Transverse colon (tissue), 4 donors: ENCODE measurements at regions of chr11 and their contacts with region 1.

Region 1: GRCh38 chr11:130434521-130435223 is 6.3 kb upstream of the ADAMTS8 start:
- DNase-seq: peak; percentile 74
- H3K4me3 ChIP-seq: peak overlapping the region; percentile 31 to 56 (median 46)
- H3K27ac ChIP-seq: peak overlapping the region; percentile 39 to 80 (median 74)
- H3K4me1 ChIP-seq: peaks cover 5 to 10% (median 7%) of the 10 kb centered on the region in 4 donors
- H3K27me3 ChIP-seq: peaks cover 13% of the 10 kb centered on the region
- CTCF ChIP-seq: peak; percentile 64 to 94 (median 73)
- EP300 ChIP-seq: no peak
- POLR2A ChIP-seq: no peak

Region 2: GRCh38 chr11:130623670-130624668 is 189.3 kb after region 1 on chr11:
- in situ Hi-C with region 1: no loop called
- intact Hi-C with region 1: loop called (anchors 10 kb)
- DNase-seq: no peak
- H3K4me3 ChIP-seq: no peak overlapping the region
- H3K27ac ChIP-seq: peak overlapping the region; percentile 51 to 59 (median 56)
- H3K4me1 ChIP-seq: peaks cover 0 to 6% (median 1%) of the 10 kb centered on the region in 4 donors
- H3K27me3 ChIP-seq: no peaks in the 10 kb centered on the region
- CTCF ChIP-seq: peak in 1 of 5 experiments; percentile 10
- EP300 ChIP-seq: no peak
- POLR2A ChIP-seq: no peak

Region 3: GRCh38 chr11:130671801-130672700 is 237.4 kb after region 1 on chr11:
- in situ Hi-C with region 1: loop called in 1 of 4 experiments (anchors 25 kb)
- intact Hi-C with region 1: no loop called
- DNase-seq: peak; percentile 49
- H3K4me3 ChIP-seq: no peak overlapping the region
- H3K27ac ChIP-seq: peak overlapping the region; percentile 39 to 75 (median 58)
- H3K4me1 ChIP-seq: peaks cover 4 to 35% (median 9%) of the 10 kb centered on the region in 4 donors
- H3K27me3 ChIP-seq: no peaks in the 10 kb centered on the region
- CTCF ChIP-seq: no peak
- EP300 ChIP-seq: no peak
- POLR2A ChIP-seq: no peak

Region 4: DNA sequence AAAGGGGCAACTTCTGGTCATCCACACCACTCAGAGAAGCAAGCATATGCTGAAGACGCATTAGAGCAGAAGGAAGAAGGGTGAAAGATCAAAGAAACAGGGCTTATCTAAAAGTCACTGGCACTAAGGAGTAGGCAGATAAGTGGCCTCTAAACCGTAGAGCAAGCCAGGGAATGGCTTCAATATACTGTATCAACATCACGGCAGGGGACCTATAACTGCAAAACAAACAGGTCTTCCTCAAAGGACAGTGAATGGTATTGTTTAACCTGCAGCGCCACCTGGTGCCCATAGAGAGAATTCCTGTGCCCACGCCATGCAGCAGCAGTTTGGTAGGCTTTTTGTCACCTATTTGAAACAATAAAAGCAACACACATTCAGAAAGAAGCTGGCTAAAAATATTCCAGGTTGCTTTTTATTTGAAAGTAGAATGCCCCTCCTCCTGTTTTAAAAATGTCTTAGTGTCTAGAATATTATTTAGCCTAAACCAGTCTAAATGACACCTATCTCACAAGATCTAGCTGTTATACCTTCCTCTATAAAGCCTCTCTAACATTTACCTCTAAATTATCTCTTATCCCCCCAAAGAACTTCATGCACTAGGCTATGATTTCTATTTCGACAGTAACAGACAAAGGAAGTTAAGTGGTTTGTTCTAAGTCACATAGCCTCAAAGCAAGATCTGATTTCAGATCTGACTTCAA is 459.8 kb after region 1 on chr11:
- in situ Hi-C with region 1: no loop called
- intact Hi-C with region 1: loop called (anchors 5 kb)
- DNase-seq: peak; percentile 74
- H3K4me3 ChIP-seq: no peak overlapping the region
- H3K27ac ChIP-seq: peak overlapping the region; percentile 17 to 90 (median 81)
- H3K4me1 ChIP-seq: peaks cover 6 to 30% (median 17%) of the 10 kb centered on the region in 4 donors
- H3K27me3 ChIP-seq: no peaks in the 10 kb centered on the region
- CTCF ChIP-seq: peak; percentile 79 to 90 (median 86)
- EP300 ChIP-seq: no peak
- POLR2A ChIP-seq: no peak